ENCODE measurements at regions of chrX and their contacts with region 1.

Region 1: DNA sequence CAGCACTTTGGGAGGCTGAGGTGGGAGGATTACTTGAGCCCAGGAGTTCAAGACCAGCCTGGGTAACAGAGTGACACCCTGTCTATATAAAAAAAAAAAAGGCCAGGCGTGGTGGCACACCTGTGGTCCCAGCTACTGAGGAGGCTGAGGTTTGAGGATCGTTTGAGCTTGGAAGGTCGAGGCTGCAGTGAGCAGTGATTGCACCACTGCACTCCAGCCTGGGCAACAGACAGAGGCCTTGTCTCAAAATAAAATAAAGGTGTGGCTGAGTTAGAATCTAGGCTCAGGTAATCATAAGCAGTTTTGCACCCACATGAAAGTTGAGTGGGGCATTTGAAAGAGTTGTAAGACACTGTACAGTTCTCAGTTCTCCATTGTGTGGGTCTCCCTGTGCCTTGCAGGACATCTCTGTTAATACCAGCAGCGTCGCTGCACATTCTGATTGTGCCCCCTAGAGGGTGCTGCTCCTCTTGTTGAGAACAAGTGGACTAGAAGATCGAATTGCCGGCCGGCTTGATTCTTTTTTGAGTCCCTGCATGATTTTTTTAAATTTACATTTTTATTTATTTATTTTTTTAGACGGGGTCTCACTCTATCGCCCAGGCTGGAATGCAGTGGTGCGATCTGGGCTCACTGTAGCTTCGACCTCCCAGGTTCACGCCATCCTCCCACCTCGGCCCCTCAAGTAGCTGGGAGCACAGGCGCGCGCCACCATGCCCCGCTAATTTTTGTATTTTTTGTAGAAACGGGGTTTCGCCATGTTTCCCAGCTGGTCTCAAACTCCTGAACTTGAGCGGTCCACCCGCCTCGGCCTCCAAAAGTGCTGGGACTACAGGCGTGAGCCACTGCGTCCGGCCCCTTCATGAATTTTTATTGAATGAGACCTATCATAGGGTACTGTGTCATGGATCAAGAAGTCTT is 73.6 kb upstream of the RBMX start:
- DNase-seq: peak; percentile 67
- ATAC-seq: peak; percentile 95
- H3K4me3 ChIP-seq: no peak overlapping the region
- H3K27ac ChIP-seq: no peak overlapping the region
- H3K4me1 ChIP-seq: no peaks in the 10 kb centered on the region
- H3K27me3 ChIP-seq: no peaks in the 10 kb centered on the region
- CTCF ChIP-seq: peak; percentile 66
- POLR2A ChIP-seq: no peak
- RAD21 ChIP-seq: peak; percentile 33; the same call in 1 of the 2 replicates

Region 2: GRCh38 chrX:137051978-137052642 is 98.0 kb after region 1 on chrX:
- CTCF ChIA-PET with region 1: no interaction called
- POLR2A ChIA-PET with region 1: no interaction called
- dilution Hi-C with region 1: no loop called
- in situ Hi-C with region 1: no loop called
- intact Hi-C with region 1: loop called (anchors 1 kb)
- DNase-seq: peak; percentile 17
- ATAC-seq: peak; percentile 97
- H3K4me3 ChIP-seq: peak overlapping the region; percentile 35
- H3K27ac ChIP-seq: no peak overlapping the region
- H3K4me1 ChIP-seq: no peaks in the 10 kb centered on the region
- H3K27me3 ChIP-seq: peaks cover 6% of the 10 kb centered on the region
- CTCF ChIP-seq: peak; percentile 59
- POLR2A ChIP-seq: no peak
- RAD21 ChIP-seq: peak; percentile 51

Region 3: DNA sequence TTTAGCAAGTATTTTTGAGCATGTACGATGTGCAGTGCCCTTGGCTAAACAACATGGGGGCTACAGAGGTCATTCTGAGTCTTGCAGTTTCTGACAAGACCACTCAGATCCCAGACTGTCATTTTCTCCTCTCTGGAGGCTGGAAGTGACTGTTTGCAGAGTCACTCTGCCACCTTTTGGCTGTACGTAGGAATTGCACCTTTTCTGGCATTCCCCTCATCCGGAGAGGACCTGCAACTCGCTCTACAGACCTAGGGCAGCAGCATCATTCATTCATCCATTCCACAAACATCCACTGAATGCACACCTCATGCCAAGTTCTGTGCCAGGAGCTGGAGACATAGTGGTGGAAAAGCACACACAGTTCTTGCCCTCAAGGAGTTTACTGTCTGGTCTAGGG is 240.0 kb after region 1 on chrX:
- CTCF ChIA-PET with region 1: interaction called, 5 read pairs
- POLR2A ChIA-PET with region 1: no interaction called
- dilution Hi-C with region 1: no loop called
- in situ Hi-C with region 1: loop called (anchors 10 kb)
- intact Hi-C with region 1: loop called (anchors 1 kb)
- DNase-seq: peak; percentile 21
- ATAC-seq: peak; percentile 70
- H3K4me3 ChIP-seq: no peak overlapping the region
- H3K27ac ChIP-seq: no peak overlapping the region
- H3K4me1 ChIP-seq: no peaks in the 10 kb centered on the region
- H3K27me3 ChIP-seq: peaks cover 1% of the 10 kb centered on the region; the same call in 1 of the 2 replicates
- CTCF ChIP-seq: peak; percentile 61
- POLR2A ChIP-seq: no peak
- RAD21 ChIP-seq: peak; percentile 50

Region 4: DNA sequence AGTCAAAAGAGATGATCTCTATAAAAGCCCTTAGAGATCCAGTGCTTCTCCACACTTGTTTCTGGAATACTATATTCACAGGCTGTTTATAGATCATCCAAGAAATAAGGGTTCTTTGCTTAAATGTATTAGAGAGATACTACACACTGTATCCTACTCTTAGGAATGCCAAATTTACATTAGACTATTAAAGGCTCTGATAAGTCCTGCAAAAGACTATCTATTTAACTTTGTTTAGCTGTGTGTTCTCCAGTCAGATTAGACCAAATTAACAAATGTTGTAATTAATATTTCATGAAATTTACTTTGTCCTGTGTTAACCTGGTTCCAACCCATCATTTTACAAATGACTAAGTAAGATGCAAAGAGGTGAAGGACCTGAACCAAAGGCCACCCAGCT is 351.3 kb after region 1 on chrX:
- CTCF ChIA-PET with region 1: no interaction called
- POLR2A ChIA-PET with region 1: no interaction called
- dilution Hi-C with region 1: no loop called
- in situ Hi-C with region 1: no loop called
- intact Hi-C with region 1: no loop called
- DNase-seq: no peak
- ATAC-seq: no peak
- H3K4me3 ChIP-seq: no peak overlapping the region
- H3K27ac ChIP-seq: no peak overlapping the region
- H3K4me1 ChIP-seq: no peaks in the 10 kb centered on the region
- H3K27me3 ChIP-seq: no peaks in the 10 kb centered on the region
- CTCF ChIP-seq: no peak
- POLR2A ChIP-seq: no peak
- RAD21 ChIP-seq: no peak

Region 5: DNA sequence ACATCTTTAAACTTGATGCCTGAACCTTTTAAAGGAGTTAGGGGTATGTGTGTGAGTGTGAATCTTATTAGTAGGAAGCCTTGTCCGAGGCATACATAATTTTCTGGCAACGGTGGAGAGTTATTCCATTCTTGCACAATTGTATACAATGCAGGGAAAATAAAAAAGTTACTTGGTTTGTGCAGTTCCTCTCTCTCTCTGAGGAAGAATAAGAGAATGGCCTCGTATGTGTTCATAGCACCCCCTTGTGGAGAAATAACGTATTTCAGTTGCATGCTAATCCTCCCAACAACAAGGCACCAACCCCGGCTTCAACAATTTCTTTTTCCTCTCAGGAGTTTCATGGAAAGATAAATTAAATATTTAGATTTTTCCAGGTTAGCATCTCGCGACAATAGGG is 1791.1 kb after region 1 on chrX:
- CTCF ChIA-PET with region 1: no interaction called
- POLR2A ChIA-PET with region 1: no interaction called
- dilution Hi-C with region 1: no loop called
- in situ Hi-C with region 1: no loop called
- intact Hi-C with region 1: loop called (anchors 5 kb)
- DNase-seq: peak; percentile 60
- ATAC-seq: peak; percentile 92
- H3K4me3 ChIP-seq: no peak overlapping the region
- H3K27ac ChIP-seq: no peak overlapping the region
- H3K4me1 ChIP-seq: no peaks in the 10 kb centered on the region
- H3K27me3 ChIP-seq: no peaks in the 10 kb centered on the region
- CTCF ChIP-seq: peak; percentile 72
- POLR2A ChIP-seq: no peak
- RAD21 ChIP-seq: peak; percentile 63

Measured in IMR-90 (cell line).